ENCODE measurements at regions of chr2 and their contacts with region 1.

Region 1: GRCh38 chr2:105287692-105288091 is 41.8 kb downstream of the TGFBRAP1 start:
- DNase-seq: no peak
- H3K4me3 ChIP-seq: no peak overlapping the region
- H3K27ac ChIP-seq: no peak overlapping the region
- H3K4me1 ChIP-seq: no peaks in the 10 kb centered on the region
- H3K27me3 ChIP-seq: no peaks in the 10 kb centered on the region
- CTCF ChIP-seq: no peak
- EP300 ChIP-seq: no peak
- POLR2A ChIP-seq: no peak

Region 2: DNA sequence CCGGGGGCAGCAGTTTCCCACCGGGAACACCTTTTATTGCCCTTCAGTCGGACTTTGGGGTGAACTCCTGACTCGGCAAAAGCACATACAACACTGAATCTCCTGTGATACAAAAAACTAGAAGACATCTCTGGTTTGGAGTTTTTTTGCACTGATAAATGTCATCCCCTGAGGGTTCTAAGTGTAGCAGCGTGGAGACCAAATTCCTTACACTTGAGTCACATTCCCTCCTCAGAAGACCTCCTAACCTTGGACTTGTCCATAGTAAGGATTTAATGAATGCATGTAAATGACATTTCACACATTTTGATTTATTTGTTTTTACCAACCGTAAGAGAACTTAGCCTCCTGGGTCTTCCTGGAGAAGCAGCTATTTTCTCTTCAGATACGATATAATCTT is 100.2 kb before region 1 on chr2:
- intact Hi-C with region 1: no loop called
- DNase-seq: no peak
- H3K4me3 ChIP-seq: no peak overlapping the region
- H3K27ac ChIP-seq: no peak overlapping the region
- H3K4me1 ChIP-seq: no peaks in the 10 kb centered on the region
- H3K27me3 ChIP-seq: no peaks in the 10 kb centered on the region
- CTCF ChIP-seq: no peak
- EP300 ChIP-seq: no peak
- POLR2A ChIP-seq: no peak

Region 3: DNA sequence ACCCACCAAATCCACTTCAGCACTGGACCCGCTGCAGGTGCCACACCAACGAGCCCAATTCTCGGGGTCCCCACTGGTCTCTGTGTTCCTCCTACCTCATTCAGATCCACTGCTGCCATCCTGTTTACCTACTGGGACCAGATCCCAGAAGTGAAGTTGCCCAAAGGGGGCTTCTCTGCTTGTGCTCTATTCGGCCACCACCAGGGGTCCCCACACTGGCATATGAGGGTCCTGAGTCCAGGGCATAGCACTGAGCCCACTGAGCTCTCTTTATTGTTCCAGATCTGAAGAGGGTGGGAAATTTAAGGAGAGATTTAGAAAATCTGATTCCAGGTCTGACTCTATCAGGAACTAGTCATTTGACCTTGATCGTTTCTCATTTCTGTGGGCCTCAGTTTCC is 43.7 kb before region 1 on chr2:
- intact Hi-C with region 1: loop called in 1 of 4 experiments (anchors 2 kb)
- DNase-seq: no peak
- H3K4me3 ChIP-seq: no peak overlapping the region
- H3K27ac ChIP-seq: no peak overlapping the region
- H3K4me1 ChIP-seq: no peaks in the 10 kb centered on the region
- H3K27me3 ChIP-seq: no peaks in the 10 kb centered on the region
- CTCF ChIP-seq: no peak
- EP300 ChIP-seq: no peak
- POLR2A ChIP-seq: no peak

Region 4: DNA sequence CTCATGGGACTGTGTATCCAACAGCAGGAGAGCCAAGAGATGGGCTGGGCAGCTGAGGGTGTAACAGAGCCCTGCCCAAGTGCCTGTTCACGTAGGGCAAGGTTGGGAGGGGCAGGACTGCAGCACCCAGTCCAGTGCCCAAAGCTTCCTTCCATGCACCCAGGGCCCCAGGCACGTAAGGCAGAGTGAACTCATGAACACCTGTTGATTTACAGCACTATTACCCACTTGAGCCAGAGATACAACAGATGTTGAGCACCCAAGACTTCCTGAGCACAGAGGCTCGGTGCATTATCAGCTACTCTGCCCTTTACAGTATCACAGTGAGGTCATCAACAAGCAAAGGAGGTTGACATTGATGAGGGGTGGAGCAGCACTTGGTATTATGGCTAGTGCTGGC is 161.4 kb after region 1 on chr2:
- intact Hi-C with region 1: no loop called
- DNase-seq: no peak
- H3K4me3 ChIP-seq: no peak overlapping the region
- H3K27ac ChIP-seq: no peak overlapping the region
- H3K4me1 ChIP-seq: no peaks in the 10 kb centered on the region
- H3K27me3 ChIP-seq: no peaks in the 10 kb centered on the region
- CTCF ChIP-seq: no peak
- EP300 ChIP-seq: no peak
- POLR2A ChIP-seq: no peak

Measured in ovary (tissue), 10 donors.